HepG2 (cell line): ENCODE measurements at regions of chr22 and their contacts with region 1.

Region 1: GRCh38 chr22:46377566-46378425 is 42.3 kb downstream of the TRMU start:
- DNase-seq: peak; percentile 96
- ATAC-seq: peak; percentile 88
- H3K4me3 ChIP-seq: peak overlapping the region; percentile 54 to 78 (median 57)
- H3K27ac ChIP-seq: peak overlapping the region; percentile 93
- H3K4me1 ChIP-seq: peaks cover 58% of the 10 kb centered on the region
- H3K27me3 ChIP-seq: no peaks in the 10 kb centered on the region; a peak in 1 of 5 replicates
- CTCF ChIP-seq: peak; percentile 38
- EP300 ChIP-seq: peak; percentile 88 to 90
- POLR2A ChIP-seq: peak; percentile 52 to 55
- RAD21 ChIP-seq: no peak; the same call in 1 of the 2 replicates

Region 2: GRCh38 chr22:46362203-46362933 is 15.4 kb before region 1 on chr22:
- CTCF ChIA-PET with region 1: no interaction called
- POLR2A ChIA-PET with region 1: interaction called, 33 read pairs
- in situ Hi-C with region 1: no loop called
- intact Hi-C with region 1: no loop called
- DNase-seq: peak; percentile 84
- ATAC-seq: peak; percentile 84
- H3K4me3 ChIP-seq: peak overlapping the region in 2 of 3 experiments; percentile 13 to 41; a peak in 3 of 6 replicates
- H3K27ac ChIP-seq: peak overlapping the region; percentile 56
- H3K4me1 ChIP-seq: peaks cover 26% of the 10 kb centered on the region
- H3K27me3 ChIP-seq: no peaks in the 10 kb centered on the region
- CTCF ChIP-seq: peak; percentile 65
- EP300 ChIP-seq: peak in 1 of 2 experiments; percentile 23; a peak in 1 of 4 replicates
- POLR2A ChIP-seq: no peak
- RAD21 ChIP-seq: peak; percentile 33

Region 3: DNA sequence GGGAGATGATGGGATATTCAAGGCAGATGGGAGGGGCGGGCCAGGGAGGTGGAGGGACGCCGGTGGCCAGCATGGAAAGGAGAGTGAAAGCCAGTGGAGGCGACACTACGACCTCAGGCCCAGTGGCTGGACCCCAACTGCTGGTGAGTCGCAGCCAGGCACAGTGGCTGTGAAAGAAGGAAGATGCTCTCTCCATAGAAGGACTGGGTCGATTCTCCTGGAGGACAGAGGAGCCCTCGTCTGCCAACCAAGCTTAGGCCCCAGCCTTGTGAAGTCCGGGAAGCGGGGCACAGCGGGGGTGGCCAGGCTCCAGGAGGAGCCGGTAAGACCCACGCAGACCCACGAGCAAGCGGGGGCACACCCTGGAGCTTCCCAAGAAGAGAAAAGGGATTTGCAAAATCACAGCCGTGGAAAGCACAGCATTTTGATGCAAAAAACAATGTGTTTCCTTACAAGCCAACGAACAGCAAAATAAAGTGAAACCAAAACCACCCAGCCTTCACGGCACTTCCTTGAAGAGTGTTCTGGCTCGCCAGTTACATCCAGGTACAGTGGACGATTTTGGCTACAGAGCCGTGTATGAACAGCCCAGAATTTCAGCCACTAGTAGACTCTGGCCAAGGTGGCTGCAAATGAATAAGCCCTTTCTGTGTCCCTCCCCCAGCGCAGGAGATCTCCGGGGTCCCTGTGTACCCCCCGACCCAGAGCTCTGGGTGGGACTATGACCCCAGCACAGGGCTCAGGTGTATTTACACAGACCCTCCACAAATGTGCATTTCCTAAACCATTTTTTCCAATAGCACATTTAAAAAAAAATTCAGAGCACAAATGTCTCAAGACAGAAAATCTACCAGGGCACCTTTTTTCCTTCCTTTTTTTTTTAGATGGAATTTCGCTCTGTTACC is 54.6 kb after region 1 on chr22:
- CTCF ChIA-PET with region 1: no interaction called
- POLR2A ChIA-PET with region 1: interaction called, 15 read pairs
- in situ Hi-C with region 1: no loop called
- intact Hi-C with region 1: no loop called
- DNase-seq: no peak
- ATAC-seq: no peak
- H3K4me3 ChIP-seq: no peak overlapping the region
- H3K27ac ChIP-seq: no peak overlapping the region
- H3K4me1 ChIP-seq: peaks cover 65% of the 10 kb centered on the region
- H3K27me3 ChIP-seq: no peaks in the 10 kb centered on the region
- CTCF ChIP-seq: no peak
- EP300 ChIP-seq: no peak
- POLR2A ChIP-seq: no peak
- RAD21 ChIP-seq: no peak

Region 4: GRCh38 chr22:46444390-46444854 is 66.6 kb after region 1 on chr22:
- CTCF ChIA-PET with region 1: no interaction called
- POLR2A ChIA-PET with region 1: no interaction called
- in situ Hi-C with region 1: no loop called
- intact Hi-C with region 1: loop called (anchors 5 kb)
- DNase-seq: peak; percentile 65
- ATAC-seq: peak; percentile 96
- H3K4me3 ChIP-seq: peak overlapping the region; percentile 14 to 62 (median 34); a peak in 5 of 6 replicates
- H3K27ac ChIP-seq: no peak overlapping the region
- H3K4me1 ChIP-seq: peaks cover 31% of the 10 kb centered on the region
- H3K27me3 ChIP-seq: no peaks in the 10 kb centered on the region; a peak in 1 of 5 replicates
- CTCF ChIP-seq: peak; percentile 73
- EP300 ChIP-seq: no peak
- POLR2A ChIP-seq: no peak
- RAD21 ChIP-seq: peak; percentile 72; the same call in 1 of the 2 replicates

Region 5: GRCh38 chr22:46462726-46463371 is 85.1 kb after region 1 on chr22:
- CTCF ChIA-PET with region 1: no interaction called
- POLR2A ChIA-PET with region 1: no interaction called
- in situ Hi-C with region 1: no loop called
- intact Hi-C with region 1: no loop called
- DNase-seq: no peak
- ATAC-seq: no peak
- H3K4me3 ChIP-seq: no peak overlapping the region
- H3K27ac ChIP-seq: no peak overlapping the region
- H3K4me1 ChIP-seq: peaks cover 32% of the 10 kb centered on the region
- H3K27me3 ChIP-seq: peaks cover 2 to 16% of the 10 kb centered on the region in 2 experiments; a peak in 4 of 5 replicates
- CTCF ChIP-seq: no peak
- EP300 ChIP-seq: no peak
- POLR2A ChIP-seq: no peak
- RAD21 ChIP-seq: no peak